Activated CD8-positive, alpha-beta T cell treated with anti-CD3 and anti-CD28 coated beads, Interleukin-2, amount 10 ng/mL, durations not matched to agents 7 days and 5 days (primary cell): ENCODE measurements at regions of chr15 and their contacts with region 1.

Region 1: GRCh38 chr15:30859091-30859874 is 44.4 kb upstream of the FAN1 start:
- DNase-seq: peak; percentile 44
- ATAC-seq: peak; percentile 57
- H3K4me3 Mint-ChIP-seq: no peak overlapping the region
- H3K27ac Mint-ChIP-seq: no peak overlapping the region
- H3K4me1 Mint-ChIP-seq: no peaks in the 10 kb centered on the region
- H3K27me3 Mint-ChIP-seq: peaks cover 8% of the 10 kb centered on the region

Region 2: GRCh38 chr15:30827625-30828288 is 31.5 kb before region 1 on chr15:
- CTCF ChIA-PET with region 1: interaction called, 22 read pairs
- POLR2A ChIA-PET with region 1: no interaction called
- DNase-seq: no peak
- ATAC-seq: peak; percentile 61
- H3K4me3 Mint-ChIP-seq: no peak overlapping the region
- H3K27ac Mint-ChIP-seq: peak overlapping the region; percentile 23
- H3K4me1 Mint-ChIP-seq: peaks cover 29% of the 10 kb centered on the region
- H3K27me3 Mint-ChIP-seq: peaks cover 3% of the 10 kb centered on the region